CD4-positive, alpha-beta memory T cell (primary cell): ENCODE measurements at regions of chr5 and their contacts with region 1.

Region 1: DNA sequence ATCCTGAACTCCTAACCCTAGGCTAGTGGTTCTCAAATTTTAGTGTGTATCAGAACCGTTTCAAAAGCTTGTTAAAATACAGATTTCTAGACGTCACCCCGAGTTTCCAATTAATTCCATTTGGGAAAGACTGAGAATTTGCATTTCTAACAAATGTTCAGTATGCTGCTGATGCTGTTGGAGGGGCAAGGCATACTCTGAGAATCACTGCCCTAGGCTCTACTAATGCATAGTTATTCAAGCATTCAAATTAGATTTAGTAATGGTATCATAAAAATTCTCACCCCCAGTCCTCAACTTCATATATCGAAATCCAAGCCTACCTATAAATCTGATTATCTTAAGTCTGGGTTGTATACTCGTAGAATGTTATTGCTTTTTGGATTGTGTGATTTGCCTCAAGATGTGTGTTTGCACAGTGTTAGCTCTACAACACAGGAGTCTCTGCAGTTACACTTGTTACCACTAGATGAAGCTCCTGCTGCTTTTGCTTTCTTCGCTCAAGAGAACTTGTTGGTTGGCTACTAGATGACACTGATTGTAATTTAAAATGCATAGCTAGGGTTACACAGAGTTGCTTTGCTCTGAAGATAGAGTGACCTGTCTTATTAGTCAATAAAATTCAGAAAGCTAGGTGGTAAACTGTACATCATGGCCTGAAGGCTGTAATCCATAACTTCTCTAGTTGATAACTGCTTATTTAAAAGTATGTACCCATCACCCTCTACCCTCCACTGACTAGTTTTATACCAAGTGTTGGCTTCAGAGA is 7.5 kb upstream of the ERAP2 start:
- DNase-seq: peak; percentile 42 to 68 (median 59)
- H3K4me3 ChIP-seq: no peak overlapping the region
- H3K4me3 Mint-ChIP-seq: no peak overlapping the region
- H3K27ac ChIP-seq: no peak overlapping the region
- H3K27ac Mint-ChIP-seq: peak overlapping the region in 2 of 7 donors; percentile 0 to 38
- H3K4me1 ChIP-seq: peaks cover 34% of the 10 kb centered on the region
- H3K4me1 Mint-ChIP-seq: peaks cover 29 to 45% (median 33%) of the 10 kb centered on the region in 4 donors
- H3K27me3 ChIP-seq: no peaks in the 10 kb centered on the region
- H3K27me3 Mint-ChIP-seq: peaks cover 0 to 2% of the 10 kb centered on the region in 2 donors

Region 2: GRCh38 chr5:96807075-96807654 is 61.6 kb before region 1 on chr5:
- CTCF ChIA-PET with region 1: interaction called, 13 read pairs
- POLR2A ChIA-PET with region 1: interaction called, 47 read pairs
- intact Hi-C with region 1: no loop called
- DNase-seq: no peak
- H3K4me3 ChIP-seq: peak overlapping the region; percentile 48 to 68
- H3K4me3 Mint-ChIP-seq: peak overlapping the region; percentile 92 to 100 (median 98)
- H3K27ac ChIP-seq: peak overlapping the region; percentile 86
- H3K27ac Mint-ChIP-seq: peak overlapping the region; percentile 95 to 100 (median 99)
- H3K4me1 ChIP-seq: peaks cover 63% of the 10 kb centered on the region
- H3K4me1 Mint-ChIP-seq: peaks cover 44 to 79% (median 64%) of the 10 kb centered on the region in 4 donors
- H3K27me3 ChIP-seq: no peaks in the 10 kb centered on the region
- H3K27me3 Mint-ChIP-seq: peaks cover 0 to 3% of the 10 kb centered on the region in 2 donors

Region 3: DNA sequence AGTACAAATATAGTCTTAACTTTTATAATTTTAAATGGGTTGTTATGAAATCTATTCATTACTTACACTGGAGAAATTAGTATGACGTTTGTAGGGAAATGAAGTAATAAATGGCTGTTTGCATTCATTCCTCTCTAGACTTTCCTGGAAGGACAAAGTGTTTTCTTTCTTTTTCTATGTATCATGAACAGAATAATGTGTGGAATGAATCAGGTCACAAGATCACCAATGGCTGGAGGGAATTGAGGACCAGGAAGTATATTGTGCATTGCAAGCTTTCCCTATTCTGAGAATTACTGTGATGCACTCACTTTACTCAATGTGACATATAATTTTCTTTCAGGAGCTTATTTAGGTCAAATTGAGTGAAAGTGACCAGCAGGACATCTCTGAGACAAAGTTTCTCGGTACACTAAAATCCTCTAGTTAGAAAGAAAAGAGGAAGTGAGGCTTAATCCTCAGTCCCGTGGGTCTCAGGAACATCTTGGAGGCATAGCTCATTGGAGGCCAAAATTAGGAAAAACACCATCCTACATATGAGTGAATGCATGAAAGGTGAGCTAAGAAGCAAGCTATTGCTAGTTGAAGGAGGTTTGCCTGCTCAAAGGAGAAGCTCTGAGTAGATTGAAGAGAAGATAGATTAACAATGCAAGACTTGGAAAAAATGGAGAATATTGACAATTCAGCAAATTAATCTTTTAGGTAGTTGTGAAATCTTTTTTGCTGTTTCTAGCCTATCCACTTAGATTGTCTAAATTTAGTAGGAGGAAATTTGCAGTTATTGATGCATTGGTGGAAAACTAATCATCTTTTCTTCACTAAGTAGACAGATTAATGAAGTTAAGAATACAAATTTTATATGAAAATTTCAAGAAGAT is 35.5 kb after region 1 on chr5:
- CTCF ChIA-PET with region 1: interaction called, 26 read pairs
- POLR2A ChIA-PET with region 1: interaction called, 3 read pairs
- intact Hi-C with region 1: no loop called
- DNase-seq: no peak
- H3K4me3 ChIP-seq: no peak overlapping the region
- H3K4me3 Mint-ChIP-seq: no peak overlapping the region
- H3K27ac ChIP-seq: no peak overlapping the region
- H3K27ac Mint-ChIP-seq: peak overlapping the region; percentile 27 to 83 (median 57)
- H3K4me1 ChIP-seq: no peaks in the 10 kb centered on the region
- H3K4me1 Mint-ChIP-seq: peaks cover 0 to 13% (median 6%) of the 10 kb centered on the region in 4 donors
- H3K27me3 ChIP-seq: no peaks in the 10 kb centered on the region
- H3K27me3 Mint-ChIP-seq: no peaks in the 10 kb centered on the region

Region 4: DNA sequence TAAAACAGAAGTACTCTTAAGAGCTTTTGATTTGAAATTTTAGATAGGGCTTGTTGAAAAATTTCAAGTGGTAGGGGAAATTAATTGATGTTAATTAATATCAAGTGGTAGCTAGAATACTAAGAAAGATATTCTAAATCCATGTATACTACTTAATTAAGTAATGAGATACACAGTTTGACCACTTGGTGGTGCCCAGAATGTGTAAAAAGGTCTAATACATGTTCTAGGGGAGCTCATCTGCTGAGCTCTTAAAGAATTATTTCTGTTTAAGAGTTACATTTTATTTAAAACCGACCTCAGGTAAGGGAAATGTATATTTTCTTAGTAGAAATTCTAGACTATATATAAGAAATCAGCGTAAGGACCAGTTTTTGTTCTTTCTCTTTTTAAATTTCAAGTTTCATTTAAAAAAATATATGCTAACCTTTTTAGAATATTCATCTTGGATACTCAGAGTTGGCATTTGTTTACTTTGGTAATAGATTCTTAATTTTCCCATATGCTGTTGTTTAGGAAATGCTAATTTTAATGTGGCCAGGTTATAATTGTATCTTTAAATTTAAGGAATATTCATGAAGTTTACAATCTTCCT is 128.6 kb after region 1 on chr5:
- CTCF ChIA-PET with region 1: interaction called, 14 read pairs
- POLR2A ChIA-PET with region 1: interaction called, 5 read pairs
- intact Hi-C with region 1: loop called (anchors 5 kb)
- DNase-seq: peak in 4 of 5 donors; percentile 14 to 24 (median 18)
- H3K4me3 ChIP-seq: no peak overlapping the region
- H3K4me3 Mint-ChIP-seq: no peak overlapping the region
- H3K27ac ChIP-seq: no peak overlapping the region
- H3K27ac Mint-ChIP-seq: peak overlapping the region in 2 of 7 donors; percentile 37 to 43
- H3K4me1 ChIP-seq: no peaks in the 10 kb centered on the region
- H3K4me1 Mint-ChIP-seq: peaks cover 8 to 22% (median 14%) of the 10 kb centered on the region in 4 donors
- H3K27me3 ChIP-seq: no peaks in the 10 kb centered on the region
- H3K27me3 Mint-ChIP-seq: no peaks in the 10 kb centered on the region

Region 5: DNA sequence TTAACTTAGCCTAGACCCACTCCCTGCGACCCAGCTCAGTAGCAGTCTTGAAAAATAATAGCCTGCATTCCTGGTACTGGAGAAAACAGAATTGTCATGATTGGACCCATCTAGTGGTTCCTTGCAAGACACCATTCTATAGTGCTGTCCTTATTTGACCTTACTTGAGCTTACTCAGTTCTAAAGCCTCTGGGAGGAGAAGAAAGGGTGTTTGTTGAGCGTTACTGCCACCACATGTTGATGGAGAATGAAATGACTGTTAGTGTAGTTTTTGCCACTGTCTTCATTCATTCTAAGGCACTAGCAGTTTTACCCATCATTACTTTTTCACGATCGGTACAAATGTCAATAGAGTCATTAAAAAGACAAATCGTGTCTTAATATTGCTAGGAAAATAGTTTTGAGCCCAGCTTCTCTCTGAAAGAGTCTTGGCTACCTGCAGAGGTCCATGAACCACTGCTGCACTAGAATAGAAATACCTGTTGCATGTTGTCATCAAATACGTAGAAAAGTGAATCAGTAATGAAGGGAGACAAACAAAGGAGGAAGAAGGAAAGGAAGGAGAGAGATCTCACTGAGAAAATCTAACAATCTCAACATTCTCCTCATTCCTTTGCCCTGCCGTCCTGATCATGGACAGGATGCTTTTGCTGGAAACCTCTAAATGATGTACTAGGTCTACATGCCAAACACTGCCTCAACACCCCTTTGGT is 177.6 kb after region 1 on chr5:
- CTCF ChIA-PET with region 1: interaction called, 14 read pairs
- POLR2A ChIA-PET with region 1: interaction called, 3 read pairs
- intact Hi-C with region 1: no loop called
- DNase-seq: no peak
- H3K4me3 ChIP-seq: no peak overlapping the region
- H3K4me3 Mint-ChIP-seq: no peak overlapping the region
- H3K27ac ChIP-seq: no peak overlapping the region
- H3K27ac Mint-ChIP-seq: no peak overlapping the region
- H3K4me1 ChIP-seq: no peaks in the 10 kb centered on the region
- H3K4me1 Mint-ChIP-seq: no peaks in the 10 kb centered on the region
- H3K27me3 ChIP-seq: no peaks in the 10 kb centered on the region
- H3K27me3 Mint-ChIP-seq: no peaks in the 10 kb centered on the region

Region 6: DNA sequence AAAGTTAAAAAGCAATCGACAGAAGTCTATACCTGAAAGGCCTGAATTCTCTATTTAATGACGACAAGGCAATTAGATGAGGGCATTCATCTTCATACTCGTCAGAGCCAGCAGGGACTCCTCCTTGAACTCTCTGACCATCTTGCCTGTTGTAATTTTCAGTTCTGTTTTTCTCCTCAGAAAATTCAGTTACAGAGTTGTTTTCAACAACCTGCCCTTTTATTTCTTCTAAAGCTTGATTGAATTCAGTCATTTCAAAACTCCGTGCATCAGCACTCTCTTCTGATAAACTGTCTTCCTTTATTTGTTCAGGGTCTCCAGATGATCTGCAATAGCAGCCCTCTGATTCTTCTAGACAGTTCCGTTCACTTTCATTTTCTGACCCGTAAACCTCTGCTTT is 298.6 kb after region 1 on chr5:
- CTCF ChIA-PET with region 1: interaction called, 218 read pairs
- POLR2A ChIA-PET with region 1: no interaction called
- intact Hi-C with region 1: loop called (anchors 1 kb)
- DNase-seq: no peak
- H3K4me3 ChIP-seq: no peak overlapping the region
- H3K4me3 Mint-ChIP-seq: peak overlapping the region in 7 of 8 donors; percentile 25 to 94 (median 78)
- H3K27ac ChIP-seq: peak overlapping the region; percentile 20
- H3K27ac Mint-ChIP-seq: peak overlapping the region; percentile 83 to 95 (median 90)
- H3K4me1 ChIP-seq: peaks cover 12% of the 10 kb centered on the region
- H3K4me1 Mint-ChIP-seq: peaks cover 11 to 27% (median 15%) of the 10 kb centered on the region in 4 donors
- H3K27me3 ChIP-seq: no peaks in the 10 kb centered on the region
- H3K27me3 Mint-ChIP-seq: no peaks in the 10 kb centered on the region